Common myeloid progenitor, CD34-positive (primary cell): ENCODE measurements at regions of chr10 and their contacts with region 1.

Region 1: DNA sequence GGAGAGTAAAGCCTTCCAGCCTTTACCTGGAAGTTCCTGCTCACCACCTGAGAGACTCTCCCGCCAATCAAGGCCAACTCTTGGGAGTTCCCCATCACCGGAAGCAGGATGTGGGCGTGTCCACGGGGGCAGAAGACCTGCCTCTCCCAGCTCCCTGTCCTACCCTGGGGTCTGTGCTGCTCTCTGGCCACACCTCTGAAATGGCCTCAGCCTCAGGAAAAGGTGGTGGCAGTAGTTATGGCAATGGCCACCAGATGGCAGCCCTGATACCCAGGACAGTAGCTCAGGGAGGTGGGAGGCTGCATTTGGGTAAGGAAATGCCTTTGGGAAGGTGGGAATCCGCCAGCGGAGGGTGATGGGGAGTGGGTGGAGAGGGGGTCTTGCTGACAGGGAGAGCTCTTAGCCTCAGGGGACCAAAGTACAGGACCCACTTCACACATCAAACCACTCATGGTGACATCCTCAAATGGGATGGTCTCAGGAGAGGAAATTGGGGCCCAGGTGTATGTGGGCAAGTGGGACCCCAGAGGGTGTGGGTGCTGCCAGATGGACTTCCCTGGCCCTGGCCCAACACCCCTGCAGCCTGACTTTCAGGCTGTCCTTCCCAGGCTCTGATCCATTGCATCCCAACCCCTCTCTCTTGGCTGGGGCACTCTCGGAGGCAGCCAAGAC is 33.9 kb downstream of the KAZALD1 start:
- DNase-seq: peak; percentile 57 to 72 (median 60)
- H3K4me3 ChIP-seq: no peak overlapping the region
- H3K27ac ChIP-seq: no peak overlapping the region
- H3K4me1 ChIP-seq: no peaks in the 10 kb centered on the region
- H3K27me3 ChIP-seq: peaks cover 2 to 88% (median 23%) of the 10 kb centered on the region in 5 experiments

Region 2: DNA sequence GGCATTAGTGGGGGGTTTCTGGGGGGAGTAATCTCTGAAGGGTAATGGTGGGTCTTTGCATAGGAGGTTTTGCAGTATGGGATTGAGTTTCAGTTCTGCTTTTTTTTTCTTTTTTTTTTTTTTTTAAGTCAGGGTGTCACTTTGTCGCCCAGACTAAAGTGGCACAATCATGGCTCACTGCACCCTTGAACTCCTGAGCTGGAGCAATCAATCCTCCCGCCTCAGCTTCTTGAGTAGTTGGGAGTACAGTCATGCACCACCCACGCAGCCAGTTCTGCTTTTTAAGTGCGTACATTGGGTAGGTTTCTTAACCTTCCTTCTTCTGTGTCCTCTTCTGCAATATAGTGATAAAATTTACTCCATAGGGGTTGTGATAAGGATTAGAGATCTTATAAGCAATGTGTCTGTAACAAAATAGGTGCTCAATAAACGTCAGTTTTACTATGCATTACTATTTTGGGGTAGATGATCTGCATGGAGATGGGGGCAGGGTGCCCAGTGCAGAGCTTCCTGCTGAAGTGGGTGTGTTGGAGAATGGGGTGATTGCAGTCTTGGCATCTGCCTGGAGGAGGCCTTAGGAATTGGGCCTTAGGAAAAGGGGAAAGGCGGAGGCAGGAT is 24.3 kb before region 1 on chr10:
- CTCF ChIA-PET with region 1: interaction called, 11 read pairs
- POLR2A ChIA-PET with region 1: no interaction called
- DNase-seq: peak; percentile 69 to 91 (median 90)
- H3K4me3 ChIP-seq: no peak overlapping the region
- H3K27ac ChIP-seq: no peak overlapping the region
- H3K4me1 ChIP-seq: peaks cover 0 to 35% (median 17%) of the 10 kb centered on the region in 4 experiments
- H3K27me3 ChIP-seq: peaks cover 6 to 61% (median 32%) of the 10 kb centered on the region in 5 experiments

Region 3: GRCh38 chr10:101080933-101081931 is 14.4 kb before region 1 on chr10:
- CTCF ChIA-PET with region 1: interaction called, 125 read pairs
- POLR2A ChIA-PET with region 1: no interaction called
- DNase-seq: peak in 2 of 3 donors; percentile 42 to 43
- H3K4me3 ChIP-seq: no peak overlapping the region
- H3K27ac ChIP-seq: no peak overlapping the region
- H3K4me1 ChIP-seq: no peaks in the 10 kb centered on the region
- H3K27me3 ChIP-seq: peaks cover 6 to 85% (median 28%) of the 10 kb centered on the region in 5 experiments

Region 4: GRCh38 chr10:101120884-101121653 is 25.4 kb after region 1 on chr10:
- CTCF ChIA-PET with region 1: interaction called, 74 read pairs
- POLR2A ChIA-PET with region 1: no interaction called
- DNase-seq: peak in 2 of 3 donors; percentile 55 to 57
- H3K4me3 ChIP-seq: peak overlapping the region; percentile 18 to 81 (median 63)
- H3K27ac ChIP-seq: no peak overlapping the region
- H3K4me1 ChIP-seq: peaks cover 0 to 19% (median 14%) of the 10 kb centered on the region in 4 experiments
- H3K27me3 ChIP-seq: peaks cover 9 to 97% (median 34%) of the 10 kb centered on the region in 5 experiments

Region 5: DNA sequence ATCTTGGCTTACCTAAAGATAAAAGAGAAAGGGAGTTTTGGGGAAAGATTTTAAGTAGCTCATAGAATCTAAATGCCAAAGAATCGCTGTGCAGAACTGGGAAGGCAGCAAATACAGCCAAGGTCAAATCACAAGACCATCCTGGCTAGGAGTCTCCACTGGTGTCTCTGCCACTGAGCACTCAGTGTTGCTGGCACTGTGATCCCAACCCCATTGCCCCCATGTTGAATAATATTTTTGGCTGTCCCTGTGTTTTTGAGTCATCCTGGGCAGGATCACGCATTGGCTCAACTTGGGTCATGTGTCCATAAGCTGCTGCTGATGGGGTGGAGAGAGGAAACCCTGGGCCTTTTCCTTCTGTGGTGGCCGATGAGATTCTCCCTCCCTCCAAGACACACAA is 56.6 kb after region 1 on chr10:
- CTCF ChIA-PET with region 1: interaction called, 434 read pairs
- POLR2A ChIA-PET with region 1: no interaction called
- DNase-seq: no peak
- H3K4me3 ChIP-seq: no peak overlapping the region
- H3K27ac ChIP-seq: no peak overlapping the region
- H3K4me1 ChIP-seq: no peaks in the 10 kb centered on the region
- H3K27me3 ChIP-seq: peaks cover 20 to 98% (median 36%) of the 10 kb centered on the region in 5 experiments